Heart right ventricle (tissue), 16 donors: ENCODE measurements at regions of chr4 and their contacts with region 1.

Region 1: DNA sequence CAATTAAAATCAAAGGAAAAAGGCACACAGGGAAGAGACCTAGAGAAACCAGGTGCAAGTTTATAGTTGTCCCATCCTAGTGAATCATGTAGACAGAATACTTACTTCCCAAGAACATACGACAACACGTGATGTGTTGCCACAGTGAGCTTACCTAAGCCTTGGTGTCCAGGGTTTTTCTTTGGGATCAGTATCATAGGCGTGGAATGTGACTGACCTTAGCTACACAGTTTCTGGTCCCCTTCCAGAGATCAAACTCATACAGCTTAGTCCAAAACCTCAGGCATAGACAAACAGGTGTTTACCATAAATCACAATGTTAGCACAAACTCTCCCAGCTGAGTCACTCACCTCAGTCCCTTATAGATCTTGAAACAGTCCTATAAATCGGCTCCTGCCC is 17.7 kb downstream of the SLC25A31 start:
- DNase-seq: no peak
- ATAC-seq: no peak
- H3K4me3 ChIP-seq: no peak overlapping the region
- H3K27ac ChIP-seq: no peak overlapping the region
- H3K4me1 ChIP-seq: no peaks in the 10 kb centered on the region
- H3K27me3 ChIP-seq: peaks cover 0 to 10% (median 0%) of the 10 kb centered on the region in 7 donors
- CTCF ChIP-seq: no peak

Region 2: DNA sequence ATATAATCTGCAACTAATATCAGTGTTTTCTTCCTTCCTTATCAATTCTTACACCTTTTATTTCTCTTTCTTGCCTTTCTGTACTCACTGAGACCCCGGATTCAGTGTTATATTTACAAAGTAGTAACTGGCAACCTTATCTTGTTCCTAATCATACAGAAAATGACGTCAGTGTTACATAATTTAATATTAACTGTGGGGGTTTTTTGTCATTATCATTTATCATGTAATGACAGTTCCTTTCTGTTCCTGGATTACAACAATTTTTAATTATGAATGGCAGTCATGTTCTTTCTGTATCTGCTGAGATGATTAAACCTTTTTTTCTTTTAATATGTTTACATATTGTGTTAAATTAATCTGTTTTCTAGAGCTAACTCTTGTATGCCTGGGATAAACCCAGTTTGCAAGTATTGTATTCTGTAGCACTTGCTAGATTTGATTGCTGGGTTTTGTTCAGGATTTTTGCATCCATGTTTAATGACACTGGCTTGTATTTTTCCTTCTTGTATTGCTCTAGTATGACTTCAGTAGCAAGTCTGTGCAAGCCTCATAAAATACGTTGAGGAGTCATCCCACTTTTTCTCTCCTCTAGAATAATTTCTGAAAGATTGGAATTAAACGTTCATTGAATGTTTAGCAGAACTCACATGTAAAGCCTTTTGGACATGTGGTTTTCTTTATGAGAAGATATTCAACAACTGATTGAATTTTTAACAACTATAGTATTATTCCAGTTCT is 23.8 kb after region 1 on chr4:
- intact Hi-C with region 1: loop called in 1 of 10 experiments (anchors 1 kb)
- DNase-seq: no peak
- ATAC-seq: no peak
- H3K4me3 ChIP-seq: no peak overlapping the region
- H3K27ac ChIP-seq: no peak overlapping the region
- H3K4me1 ChIP-seq: no peaks in the 10 kb centered on the region
- H3K27me3 ChIP-seq: peaks cover 0 to 24% (median 0%) of the 10 kb centered on the region in 7 donors
- CTCF ChIP-seq: no peak

Region 3: DNA sequence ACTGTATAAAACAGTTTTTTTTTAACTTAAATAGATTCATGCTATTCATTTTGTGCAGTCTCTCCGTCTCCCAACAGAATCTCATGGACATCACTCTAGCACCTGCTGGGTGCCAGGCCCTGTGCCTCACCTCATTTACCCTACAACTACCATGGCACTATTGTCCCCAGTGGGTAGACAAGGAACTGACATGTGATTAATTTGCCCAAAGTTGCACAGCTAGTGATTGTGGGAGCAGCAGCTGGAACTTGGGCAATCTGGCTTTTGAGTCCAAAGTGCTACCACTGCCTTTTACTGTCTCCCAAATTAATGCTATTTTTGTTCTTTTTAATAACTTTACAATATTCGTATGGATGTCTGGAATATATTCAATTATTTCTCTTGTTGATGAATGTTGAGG is 551.0 kb after region 1 on chr4:
- intact Hi-C with region 1: no loop called
- DNase-seq: no peak
- ATAC-seq: no peak
- H3K4me3 ChIP-seq: no peak overlapping the region
- H3K27ac ChIP-seq: no peak overlapping the region
- H3K4me1 ChIP-seq: peaks cover 0 to 19% (median 0%) of the 10 kb centered on the region in 9 donors
- H3K27me3 ChIP-seq: no peaks in the 10 kb centered on the region
- CTCF ChIP-seq: no peak